ENCODE measurements at regions of chr3 and their contacts with region 1.

Region 1: GRCh38 chr3:179956416-179956830 is 80.3 kb downstream of the PEX5L start:
- DNase-seq: peak; percentile 96
- ATAC-seq: peak; percentile 91
- H3K4me3 ChIP-seq: peak overlapping the region; percentile 4; the same call in 1 of the 2 replicates
- H3K27ac ChIP-seq: peak overlapping the region; percentile 70
- H3K4me1 ChIP-seq: peaks cover 27% of the 10 kb centered on the region
- H3K27me3 ChIP-seq: no peaks in the 10 kb centered on the region
- CTCF ChIP-seq: no peak
- EP300 ChIP-seq: peak; percentile 89 to 98
- POLR2A ChIP-seq: no peak
- RAD21 ChIP-seq: no peak

Region 2: GRCh38 chr3:179967622-179968021 is 11.2 kb after region 1 on chr3:
- CTCF ChIA-PET with region 1: interaction called, 9 read pairs
- POLR2A ChIA-PET with region 1: interaction called, 17 read pairs
- RAD21 ChIA-PET with region 1: interaction called, 22 read pairs
- SMC1A ChIA-PET with region 1: interaction called, 37 read pairs
- in situ Hi-C with region 1: no loop called
- intact Hi-C with region 1: no loop called
- DNase-seq: no peak
- ATAC-seq: peak; percentile 79
- H3K4me3 ChIP-seq: peak overlapping the region; percentile 10; the same call in 1 of the 2 replicates
- H3K27ac ChIP-seq: peak overlapping the region; percentile 30; the same call in 1 of the 2 replicates
- H3K4me1 ChIP-seq: peaks cover under 1% of the 10 kb centered on the region; the same call in 1 of the 2 replicates
- H3K27me3 ChIP-seq: no peaks in the 10 kb centered on the region
- CTCF ChIP-seq: no peak
- EP300 ChIP-seq: no peak
- POLR2A ChIP-seq: no peak
- RAD21 ChIP-seq: no peak

Region 3: DNA sequence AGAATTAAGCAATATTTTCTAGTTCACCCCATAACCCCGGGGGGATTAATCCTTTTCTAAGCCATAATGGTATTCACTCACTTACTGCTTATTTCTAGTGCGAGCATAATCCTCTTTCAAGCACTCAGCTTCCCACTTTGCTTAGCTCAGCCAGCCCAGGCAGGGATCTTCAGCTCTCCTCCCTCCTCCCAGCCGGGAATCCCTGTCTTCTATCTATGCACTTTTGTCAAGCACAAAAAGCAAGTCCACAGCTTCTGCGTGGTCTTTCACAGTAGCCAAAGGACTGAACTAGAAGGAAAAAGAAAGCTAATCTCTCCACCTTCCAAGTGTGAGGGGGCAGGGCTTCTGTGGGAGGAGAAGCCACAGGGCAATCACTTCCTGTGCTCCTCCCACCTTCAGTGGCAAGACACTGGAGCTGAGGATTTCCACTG is 17.5 kb after region 1 on chr3:
- CTCF ChIA-PET with region 1: interaction called, 3 read pairs
- POLR2A ChIA-PET with region 1: interaction called, 5 read pairs
- RAD21 ChIA-PET with region 1: interaction called, 13 read pairs
- SMC1A ChIA-PET with region 1: interaction called, 14 read pairs
- in situ Hi-C with region 1: no loop called
- intact Hi-C with region 1: no loop called
- DNase-seq: no peak
- ATAC-seq: peak; percentile 69
- H3K4me3 ChIP-seq: no peak overlapping the region
- H3K27ac ChIP-seq: no peak overlapping the region
- H3K4me1 ChIP-seq: no peaks in the 10 kb centered on the region; the same call in 1 of the 2 replicates
- H3K27me3 ChIP-seq: no peaks in the 10 kb centered on the region
- CTCF ChIP-seq: no peak
- EP300 ChIP-seq: no peak
- POLR2A ChIP-seq: no peak
- RAD21 ChIP-seq: no peak

Region 4: DNA sequence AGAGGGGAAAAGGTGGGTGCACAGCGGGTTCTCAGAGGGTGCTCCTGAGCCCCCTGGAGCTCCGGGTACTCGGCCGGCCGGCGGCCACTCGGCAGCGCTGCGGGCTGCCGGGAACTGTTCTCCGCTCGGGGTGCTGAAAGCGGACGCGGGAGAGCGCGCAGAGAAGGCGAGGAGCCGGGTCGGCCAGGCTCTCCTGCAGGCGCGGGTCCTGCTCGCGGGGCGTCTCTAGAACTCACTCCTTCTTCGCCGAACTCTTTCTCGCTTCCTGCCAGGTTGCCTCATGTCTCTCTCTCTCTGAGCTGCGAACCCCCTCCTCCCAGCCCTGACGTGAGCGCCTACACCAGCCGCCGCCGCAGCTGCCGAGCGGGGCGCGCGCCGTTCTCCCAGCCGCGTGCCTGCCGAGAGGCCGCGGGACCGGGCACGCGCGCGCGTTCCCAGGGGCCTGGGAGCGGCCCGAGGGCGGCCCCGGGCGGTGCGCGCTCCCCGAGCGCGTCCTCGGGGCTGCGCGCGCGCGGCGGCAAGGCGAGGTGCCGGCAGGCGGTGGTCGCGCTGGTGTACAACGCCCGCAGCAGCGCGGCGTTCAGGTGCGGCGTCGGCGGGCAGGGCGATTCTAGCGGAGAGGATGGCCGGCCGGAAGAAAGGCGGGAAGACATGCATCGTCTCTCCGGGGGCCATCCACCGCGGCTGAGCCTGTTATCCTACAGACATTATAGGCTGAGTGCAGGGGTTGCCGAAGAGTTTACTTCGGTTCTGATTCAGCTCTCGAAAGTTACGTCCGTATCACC is 80.4 kb after region 1 on chr3 and contains the start of gene PEX5L:
- CTCF ChIA-PET with region 1: interaction called, 3 read pairs
- POLR2A ChIA-PET with region 1: no interaction called
- RAD21 ChIA-PET with region 1: no interaction called
- SMC1A ChIA-PET with region 1: interaction called, 8 read pairs
- in situ Hi-C with region 1: no loop called
- intact Hi-C with region 1: loop called (anchors 5 kb)
- DNase-seq: no peak
- ATAC-seq: peak; percentile 93
- H3K4me3 ChIP-seq: peak within 1 kb of the TSS; percentile 65
- H3K27ac ChIP-seq: no peak within 1 kb of the TSS
- H3K4me1 ChIP-seq: peaks cover 5% of the 10 kb centered on the region; the same call in 1 of the 2 replicates
- H3K27me3 ChIP-seq: 0 out of 4 replicates have a peak, but pooled peaks cover 0 to 3% of the 10 kb centered on the region in 2 experiments
- CTCF ChIP-seq: 0 out of 6 replicates have a peak, but pooled peaks of 1 of the 3 experiments have one; percentile 5
- EP300 ChIP-seq: no peak
- POLR2A ChIP-seq: no peak
- RAD21 ChIP-seq: peak; percentile 17; the same call in 1 of the 2 replicates
- polyA plus RNA-seq, gene PEX5L: 0.11 to 0.13 TPM

Region 5: GRCh38 chr3:180267202-180267843 is 310.9 kb after region 1 on chr3:
- CTCF ChIA-PET with region 1: no interaction called
- POLR2A ChIA-PET with region 1: no interaction called
- RAD21 ChIA-PET with region 1: interaction called, 5 read pairs
- SMC1A ChIA-PET with region 1: no interaction called
- in situ Hi-C with region 1: no loop called
- intact Hi-C with region 1: loop called (anchors 10 kb)
- DNase-seq: peak; percentile 69
- ATAC-seq: peak; percentile 99
- H3K4me3 ChIP-seq: peak overlapping the region; percentile 20; the same call in 1 of the 2 replicates
- H3K27ac ChIP-seq: peak overlapping the region; percentile 54
- H3K4me1 ChIP-seq: peaks cover 10% of the 10 kb centered on the region; the same call in 1 of the 2 replicates
- H3K27me3 ChIP-seq: no peaks in the 10 kb centered on the region
- CTCF ChIP-seq: no peak
- EP300 ChIP-seq: no peak
- POLR2A ChIP-seq: no peak
- RAD21 ChIP-seq: no peak

Region 6: DNA sequence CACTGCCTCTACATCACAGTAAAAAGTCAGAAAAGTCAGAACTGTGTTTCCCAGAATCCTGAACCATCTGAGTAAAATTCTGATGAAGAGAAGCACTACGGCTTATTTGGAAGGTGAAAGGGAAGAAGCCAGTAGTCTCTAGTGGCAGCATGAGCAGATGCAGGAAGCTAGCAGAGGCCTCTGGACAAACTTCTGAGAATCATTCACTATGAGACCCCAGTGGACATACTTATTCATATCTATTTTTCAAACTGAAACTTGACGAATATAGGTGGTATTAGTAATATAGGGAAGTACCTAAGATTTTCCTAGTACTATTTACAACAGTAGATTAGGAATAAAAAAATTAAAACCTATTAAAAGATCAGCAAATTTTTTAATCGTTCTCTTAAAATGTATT is 372.8 kb after region 1 on chr3:
- CTCF ChIA-PET with region 1: no interaction called
- POLR2A ChIA-PET with region 1: no interaction called
- RAD21 ChIA-PET with region 1: interaction called, 6 read pairs
- SMC1A ChIA-PET with region 1: interaction called, 4 read pairs
- in situ Hi-C with region 1: no loop called
- intact Hi-C with region 1: loop called (anchors 2 kb)
- DNase-seq: peak; percentile 43
- ATAC-seq: peak; percentile 88
- H3K4me3 ChIP-seq: no peak overlapping the region
- H3K27ac ChIP-seq: peak overlapping the region; percentile 56
- H3K4me1 ChIP-seq: peaks cover 32% of the 10 kb centered on the region
- H3K27me3 ChIP-seq: no peaks in the 10 kb centered on the region
- CTCF ChIP-seq: peak; percentile 26 to 32 (median 29); a peak in 2 of 6 replicates
- EP300 ChIP-seq: peak in 1 of 2 experiments; percentile 21; a peak in 1 of 4 replicates
- POLR2A ChIP-seq: no peak
- RAD21 ChIP-seq: peak; percentile 55